K562 (cell line): ENCODE measurements at regions of chr6 and their contacts with region 1.

Region 1: GRCh38 chr6:157133856-157134255 is 189.5 kb downstream of the TMEM242 start:
- DNase-seq: no peak
- ATAC-seq: no peak
- H3K4me3 ChIP-seq: no peak overlapping the region
- H3K27ac ChIP-seq: no peak overlapping the region
- H3K4me1 ChIP-seq: peaks cover 0 to 3% of the 10 kb centered on the region in 2 experiments; a peak in 3 of 5 replicates
- H3K27me3 ChIP-seq: no peaks in the 10 kb centered on the region
- CTCF ChIP-seq: no peak
- EP300 ChIP-seq: no peak
- POLR2A ChIP-seq: no peak
- RAD21 ChIP-seq: no peak

Region 2: DNA sequence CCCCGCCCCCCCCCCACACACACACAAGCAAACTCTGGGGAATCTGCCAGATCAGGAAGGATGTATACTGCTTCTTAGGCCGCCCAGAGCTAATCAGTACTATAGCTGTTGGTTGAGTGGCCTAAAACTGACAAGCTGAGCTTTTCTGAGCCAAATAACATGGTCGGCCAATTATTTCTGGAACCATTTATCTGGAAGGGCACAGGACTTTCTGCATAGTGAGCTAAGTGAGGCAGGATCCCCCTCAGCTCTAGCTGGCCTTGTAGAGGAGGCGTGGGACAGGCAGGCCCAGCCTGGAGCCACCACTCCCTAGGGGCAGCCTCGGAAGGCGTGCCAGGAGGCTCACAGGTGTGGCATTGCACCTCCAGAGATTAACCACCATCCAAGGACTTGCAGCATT is 10.6 kb before region 1 on chr6:
- CTCF ChIA-PET with region 1: no interaction called
- POLR2A ChIA-PET with region 1: interaction called, 11 read pairs
- in situ Hi-C with region 1: no loop called
- intact Hi-C with region 1: no loop called
- DNase-seq: no peak
- ATAC-seq: no peak
- H3K4me3 ChIP-seq: no peak overlapping the region
- H3K27ac ChIP-seq: no peak overlapping the region
- H3K4me1 ChIP-seq: no peaks in the 10 kb centered on the region
- H3K27me3 ChIP-seq: no peaks in the 10 kb centered on the region
- CTCF ChIP-seq: no peak
- EP300 ChIP-seq: no peak
- POLR2A ChIP-seq: no peak
- RAD21 ChIP-seq: no peak

Region 3: DNA sequence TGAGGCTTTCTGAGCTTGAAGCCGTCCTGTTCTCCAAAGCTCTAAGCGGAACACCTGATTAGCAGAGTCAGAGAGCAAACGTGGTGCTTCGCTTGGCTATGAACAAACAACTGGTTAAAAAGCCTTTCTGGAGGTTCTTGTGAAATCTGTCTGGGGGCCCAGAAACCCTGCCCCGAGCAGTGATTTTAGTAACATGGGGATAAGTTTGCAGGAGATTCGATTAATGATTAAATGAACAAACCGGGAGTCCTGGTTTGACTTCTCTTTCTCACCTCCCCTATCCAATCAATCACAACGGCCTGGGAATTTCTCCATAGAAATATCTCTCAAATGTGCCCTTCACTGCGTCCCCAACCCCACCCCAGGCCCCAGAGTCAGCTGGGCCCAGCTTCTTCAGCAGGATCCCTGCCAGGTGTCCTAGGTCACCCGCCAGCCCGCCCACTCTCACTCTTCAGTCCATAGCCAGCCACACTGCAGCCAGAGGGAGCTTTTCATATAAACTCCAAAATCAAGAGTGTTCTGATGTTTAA is 290.7 kb after region 1 on chr6:
- CTCF ChIA-PET with region 1: no interaction called
- POLR2A ChIA-PET with region 1: no interaction called
- in situ Hi-C with region 1: no loop called
- intact Hi-C with region 1: no loop called
- DNase-seq: no peak
- ATAC-seq: no peak
- H3K4me3 ChIP-seq: no peak overlapping the region
- H3K27ac ChIP-seq: no peak overlapping the region
- H3K4me1 ChIP-seq: peaks cover 11 to 14% of the 10 kb centered on the region in 2 experiments; a peak in 4 of 5 replicates
- H3K27me3 ChIP-seq: no peaks in the 10 kb centered on the region
- CTCF ChIP-seq: no peak
- EP300 ChIP-seq: no peak
- POLR2A ChIP-seq: no peak
- RAD21 ChIP-seq: no peak